ENCODE measurements at regions of chr5 and their contacts with region 1.

Region 1: GRCh38 chr5:111158105-111158744 is 66.0 kb upstream of the CAMK4 start:
- DNase-seq: peak; percentile 65 to 75
- H3K4me3 ChIP-seq: no peak overlapping the region
- H3K4me3 Mint-ChIP-seq: no peak overlapping the region
- H3K27ac Mint-ChIP-seq: no peak overlapping the region
- H3K4me1 ChIP-seq: no peaks in the 10 kb centered on the region
- H3K4me1 Mint-ChIP-seq: no peaks in the 10 kb centered on the region
- H3K27me3 ChIP-seq: no peaks in the 10 kb centered on the region
- H3K27me3 Mint-ChIP-seq: peaks cover 10% of the 10 kb centered on the region
- CTCF ChIP-seq: peak; percentile 97 to 99

Region 2: GRCh38 chr5:111143910-111144309 is 14.3 kb before region 1 on chr5:
- CTCF ChIA-PET with region 1: no interaction called
- POLR2A ChIA-PET with region 1: no interaction called
- intact Hi-C with region 1: no loop called
- DNase-seq: no peak
- H3K4me3 ChIP-seq: no peak overlapping the region
- H3K4me3 Mint-ChIP-seq: no peak overlapping the region
- H3K27ac Mint-ChIP-seq: no peak overlapping the region
- H3K4me1 ChIP-seq: no peaks in the 10 kb centered on the region
- H3K4me1 Mint-ChIP-seq: no peaks in the 10 kb centered on the region
- H3K27me3 ChIP-seq: no peaks in the 10 kb centered on the region
- H3K27me3 Mint-ChIP-seq: peaks cover 6% of the 10 kb centered on the region
- CTCF ChIP-seq: no peak

Region 3: GRCh38 chr5:111461255-111461671 is 303.0 kb after region 1 on chr5:
- CTCF ChIA-PET with region 1: interaction called, 3 read pairs
- POLR2A ChIA-PET with region 1: no interaction called
- intact Hi-C with region 1: loop called (anchors 5 kb)
- DNase-seq: no peak
- H3K4me3 ChIP-seq: no peak overlapping the region
- H3K4me3 Mint-ChIP-seq: no peak overlapping the region
- H3K27ac Mint-ChIP-seq: no peak overlapping the region
- H3K4me1 ChIP-seq: no peaks in the 10 kb centered on the region
- H3K4me1 Mint-ChIP-seq: no peaks in the 10 kb centered on the region
- H3K27me3 ChIP-seq: no peaks in the 10 kb centered on the region
- H3K27me3 Mint-ChIP-seq: peaks cover 38% of the 10 kb centered on the region
- CTCF ChIP-seq: no peak